Dendritic cell treated with granulocyte-macrophage colony-stimulating factor and Interleukin-4, amounts not matched to agents 40 ng/mL and 50 ng/mL, for 4 days (primary cell): ENCODE measurements at regions of chr1 and their contacts with region 1.

Region 1: DNA sequence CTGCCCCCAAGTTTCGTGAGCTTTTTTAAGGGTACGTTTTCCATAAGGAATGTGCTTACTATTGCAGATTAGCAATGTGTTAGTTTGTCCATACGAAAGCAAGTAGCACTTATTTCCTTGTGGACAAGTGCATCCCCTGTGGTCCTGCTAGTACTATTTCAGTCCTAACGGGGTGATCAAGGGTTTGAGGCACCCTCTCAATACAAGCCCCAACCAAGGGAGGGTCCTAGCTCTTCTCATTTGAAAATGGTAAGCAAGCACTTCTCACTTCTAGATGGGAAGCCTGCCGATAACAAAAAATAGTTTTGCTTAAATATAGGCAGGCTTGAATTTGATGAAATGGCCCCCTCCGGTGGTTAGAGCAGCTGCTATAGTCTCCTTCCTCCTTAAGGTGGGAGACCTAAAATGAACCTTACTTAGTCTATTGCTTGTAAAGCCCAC is 64.0 kb upstream of the HMCN1 start:
- H3K4me3 Mint-ChIP-seq: no peak overlapping the region
- H3K27ac Mint-ChIP-seq: no peak overlapping the region
- H3K4me1 Mint-ChIP-seq: peaks cover 30% of the 10 kb centered on the region
- H3K27me3 Mint-ChIP-seq: no peaks in the 10 kb centered on the region

Region 2: GRCh38 chr1:185439727-185440415 is 230.3 kb before region 1 on chr1:
- intact Hi-C with region 1: loop called (anchors 10 kb)
- H3K4me3 Mint-ChIP-seq: no peak overlapping the region
- H3K27ac Mint-ChIP-seq: no peak overlapping the region
- H3K4me1 Mint-ChIP-seq: peaks cover 15% of the 10 kb centered on the region
- H3K27me3 Mint-ChIP-seq: no peaks in the 10 kb centered on the region

Region 3: GRCh38 chr1:185646202-185646683 is 24.0 kb before region 1 on chr1:
- intact Hi-C with region 1: no loop called
- H3K4me3 Mint-ChIP-seq: no peak overlapping the region
- H3K27ac Mint-ChIP-seq: no peak overlapping the region
- H3K4me1 Mint-ChIP-seq: peaks cover 6% of the 10 kb centered on the region
- H3K27me3 Mint-ChIP-seq: no peaks in the 10 kb centered on the region